ENCODE measurements at regions of chr14 and their contacts with region 1.

Region 1: DNA sequence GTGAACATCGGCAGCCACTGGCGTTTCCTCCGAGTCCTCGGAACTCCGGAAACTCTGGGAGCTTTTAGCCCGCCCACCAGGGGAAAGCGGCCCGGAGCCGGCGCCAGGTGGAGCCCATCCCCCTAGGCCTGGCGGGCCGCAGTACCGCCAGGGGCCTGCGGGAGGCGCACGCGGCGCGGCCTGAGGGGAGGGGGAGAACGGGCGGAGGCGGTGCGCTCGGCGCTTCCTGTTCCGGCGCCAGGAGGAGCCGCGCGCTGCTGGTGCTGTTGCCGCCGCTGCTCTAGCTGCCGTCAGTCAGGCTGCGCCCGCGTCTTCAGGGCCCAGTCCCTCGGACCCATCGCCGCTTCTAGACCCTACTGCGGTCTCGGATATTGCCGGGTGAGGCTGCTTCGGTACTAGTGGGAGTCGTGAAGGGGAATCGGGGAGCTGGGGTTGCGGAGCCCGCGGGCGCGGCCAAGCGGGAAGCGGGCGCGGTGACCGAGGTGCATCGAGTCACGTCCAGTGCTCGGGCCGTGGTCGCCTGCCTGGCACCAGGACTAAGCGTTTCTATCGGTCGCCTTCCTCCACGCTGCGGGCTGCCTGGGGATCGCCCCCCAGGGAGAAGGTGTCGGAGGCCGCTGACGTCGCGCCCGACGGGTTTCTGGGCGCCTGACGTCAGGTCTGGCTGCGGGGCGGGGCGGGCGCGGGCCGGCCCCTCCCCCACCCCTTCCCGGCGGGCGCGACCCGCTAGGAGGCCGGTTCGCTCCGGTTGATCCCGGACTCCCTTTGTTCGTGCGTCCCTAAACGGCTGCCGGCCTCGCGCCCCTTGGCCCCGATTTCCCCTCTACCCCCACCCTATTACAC is at the start of gene MAPK1IP1L:
- DNase-seq: peak; percentile 63
- ATAC-seq: peak; percentile 93
- H3K4me3 ChIP-seq: peak within 1 kb of the TSS; percentile 82
- H3K27ac ChIP-seq: peak within 1 kb of the TSS; percentile 99
- H3K4me1 ChIP-seq: no peaks in the 10 kb centered on the region; the same call in 1 of the 2 replicates
- H3K27me3 ChIP-seq: no peaks in the 10 kb centered on the region
- CTCF ChIP-seq: peak; percentile 96 to 99 (median 99); a peak in 5 of 6 replicates
- EP300 ChIP-seq: peak; percentile 37 to 41; a peak in 2 of 4 replicates
- POLR2A ChIP-seq: peak; percentile 100
- RAD21 ChIP-seq: peak; percentile 68
- polyA plus RNA-seq, gene MAPK1IP1L: 55.7 to 66.0 TPM

Region 2: DNA sequence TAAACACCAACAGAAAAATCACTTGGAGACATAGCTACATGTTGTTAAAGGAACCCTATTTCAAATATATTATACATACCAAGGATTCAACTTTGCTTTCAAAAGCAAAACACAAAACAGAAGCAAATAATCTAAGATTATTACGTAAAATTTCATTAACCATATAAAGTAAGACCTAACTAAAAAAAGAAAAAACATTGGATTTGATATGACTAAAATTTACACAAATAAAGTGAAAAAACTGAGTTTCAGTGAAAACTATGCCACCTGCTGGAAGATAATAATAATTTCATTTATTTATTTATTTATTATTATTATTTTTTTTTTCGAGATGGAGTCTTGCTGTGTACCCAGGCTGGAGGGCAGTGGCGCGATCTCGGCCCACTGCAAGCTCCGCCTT is 69.9 kb before region 1 on chr14:
- CTCF ChIA-PET with region 1: no interaction called
- POLR2A ChIA-PET with region 1: no interaction called
- RAD21 ChIA-PET with region 1: no interaction called
- SMC1A ChIA-PET with region 1: no interaction called
- in situ Hi-C with region 1: no loop called
- intact Hi-C with region 1: no loop called
- DNase-seq: no peak
- ATAC-seq: no peak
- H3K4me3 ChIP-seq: no peak overlapping the region
- H3K27ac ChIP-seq: no peak overlapping the region
- H3K4me1 ChIP-seq: no peaks in the 10 kb centered on the region
- H3K27me3 ChIP-seq: no peaks in the 10 kb centered on the region
- CTCF ChIP-seq: no peak; a peak in 1 of 6 replicates
- EP300 ChIP-seq: no peak
- POLR2A ChIP-seq: no peak
- RAD21 ChIP-seq: no peak

Region 3: GRCh38 chr14:55026793-55027561 is 24.7 kb before region 1 on chr14 and contains the starts of genes SOCS4 and WDHD1:
- CTCF ChIA-PET with region 1: interaction called, 44 read pairs
- POLR2A ChIA-PET with region 1: interaction called, 14 read pairs
- RAD21 ChIA-PET with region 1: interaction called, 68 read pairs
- SMC1A ChIA-PET with region 1: interaction called, 42 read pairs
- in situ Hi-C with region 1: no loop called
- intact Hi-C with region 1: no loop called
- DNase-seq: peak; percentile 82
- ATAC-seq: peak; percentile 84
- H3K4me3 ChIP-seq: peak within 1 kb of the TSS; percentile 78
- H3K27ac ChIP-seq: peak within 1 kb of the TSS; percentile 91
- H3K4me1 ChIP-seq: no peaks in the 10 kb centered on the region
- H3K27me3 ChIP-seq: no peaks in the 10 kb centered on the region
- CTCF ChIP-seq: 0 out of 6 replicates have a peak, but pooled peaks of 1 of the 3 experiments have one; percentile 1
- EP300 ChIP-seq: no peak; a peak in 2 of 4 replicates
- POLR2A ChIP-seq: peak; percentile 96
- RAD21 ChIP-seq: no peak
- polyA plus RNA-seq, gene SOCS4: 5.7 to 7.6 TPM
- polyA plus RNA-seq, gene WDHD1: 11.3 to 14.8 TPM

Region 4: GRCh38 chr14:55062517-55063351 is 11.1 kb after region 1 on chr14:
- CTCF ChIA-PET with region 1: interaction called, 15 read pairs
- POLR2A ChIA-PET with region 1: interaction called, 8 read pairs
- RAD21 ChIA-PET with region 1: interaction called, 11 read pairs
- SMC1A ChIA-PET with region 1: interaction called, 31 read pairs
- in situ Hi-C with region 1: no loop called
- intact Hi-C with region 1: no loop called
- DNase-seq: no peak
- ATAC-seq: no peak; the same call in 2 of the 3 replicates
- H3K4me3 ChIP-seq: no peak overlapping the region
- H3K27ac ChIP-seq: no peak overlapping the region
- H3K4me1 ChIP-seq: no peaks in the 10 kb centered on the region
- H3K27me3 ChIP-seq: no peaks in the 10 kb centered on the region
- CTCF ChIP-seq: no peak
- EP300 ChIP-seq: no peak
- POLR2A ChIP-seq: no peak
- RAD21 ChIP-seq: no peak

Region 5: GRCh38 chr14:55077155-55077554 is 25.5 kb after region 1 on chr14:
- CTCF ChIA-PET with region 1: interaction called, 30 read pairs
- POLR2A ChIA-PET with region 1: interaction called, 48 read pairs
- RAD21 ChIA-PET with region 1: interaction called, 49 read pairs
- SMC1A ChIA-PET with region 1: interaction called, 98 read pairs
- in situ Hi-C with region 1: no loop called
- intact Hi-C with region 1: no loop called
- DNase-seq: no peak
- ATAC-seq: peak; percentile 48
- H3K4me3 ChIP-seq: no peak overlapping the region
- H3K27ac ChIP-seq: no peak overlapping the region; the same call in 1 of the 2 replicates
- H3K4me1 ChIP-seq: peaks cover 40% of the 10 kb centered on the region
- H3K27me3 ChIP-seq: no peaks in the 10 kb centered on the region
- CTCF ChIP-seq: no peak
- EP300 ChIP-seq: no peak
- POLR2A ChIP-seq: no peak
- RAD21 ChIP-seq: no peak

Region 6: DNA sequence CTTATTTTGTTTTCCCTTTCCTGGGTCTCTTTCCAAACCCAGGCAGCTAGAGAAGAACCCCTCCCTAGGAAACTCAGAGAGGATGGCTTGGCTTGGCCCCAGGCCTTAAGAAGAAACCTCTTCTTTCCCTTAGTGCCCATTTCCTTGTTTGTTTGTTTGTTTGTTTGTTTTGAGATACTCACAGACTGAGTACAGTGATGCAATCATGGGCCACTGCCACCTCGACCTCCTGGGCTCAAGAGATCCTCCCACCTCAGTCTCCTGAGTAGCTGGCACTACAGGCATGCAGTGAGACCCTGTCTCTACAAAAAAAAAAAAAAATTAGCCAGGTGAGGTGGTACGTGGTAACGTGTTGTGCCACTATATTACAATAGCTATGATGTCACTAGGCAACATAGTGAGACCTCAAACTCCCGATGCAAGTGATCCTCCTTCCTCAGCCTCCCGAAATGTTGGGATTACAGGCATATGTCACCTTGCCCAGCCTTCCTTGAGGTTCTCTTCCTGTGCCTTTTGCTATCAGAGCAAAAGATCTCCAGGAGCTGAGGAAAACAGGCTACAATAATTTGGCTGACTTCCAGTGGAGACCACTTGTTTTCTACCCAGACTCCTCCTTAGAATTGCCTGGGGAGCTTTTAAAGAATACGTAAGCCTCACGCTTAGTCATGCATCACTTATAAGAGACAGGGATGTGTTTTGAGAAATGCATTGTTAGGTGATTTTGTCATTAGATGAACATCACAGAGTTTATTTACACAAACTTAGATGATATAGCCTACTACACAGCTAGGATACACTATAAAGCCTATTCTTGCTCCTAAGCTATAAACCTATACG is 42.9 kb after region 1 on chr14:
- CTCF ChIA-PET with region 1: interaction called, 25 read pairs
- POLR2A ChIA-PET with region 1: interaction called, 4 read pairs
- RAD21 ChIA-PET with region 1: interaction called, 8 read pairs
- SMC1A ChIA-PET with region 1: interaction called, 20 read pairs
- in situ Hi-C with region 1: no loop called
- intact Hi-C with region 1: no loop called
- DNase-seq: no peak
- ATAC-seq: no peak
- H3K4me3 ChIP-seq: no peak overlapping the region
- H3K27ac ChIP-seq: no peak overlapping the region
- H3K4me1 ChIP-seq: peaks cover 25% of the 10 kb centered on the region
- H3K27me3 ChIP-seq: no peaks in the 10 kb centered on the region
- CTCF ChIP-seq: no peak
- EP300 ChIP-seq: no peak
- POLR2A ChIP-seq: no peak
- RAD21 ChIP-seq: no peak